CD8-positive, alpha-beta T cell (primary cell): ENCODE measurements at regions of chr7 and their contacts with region 1.

Region 1: DNA sequence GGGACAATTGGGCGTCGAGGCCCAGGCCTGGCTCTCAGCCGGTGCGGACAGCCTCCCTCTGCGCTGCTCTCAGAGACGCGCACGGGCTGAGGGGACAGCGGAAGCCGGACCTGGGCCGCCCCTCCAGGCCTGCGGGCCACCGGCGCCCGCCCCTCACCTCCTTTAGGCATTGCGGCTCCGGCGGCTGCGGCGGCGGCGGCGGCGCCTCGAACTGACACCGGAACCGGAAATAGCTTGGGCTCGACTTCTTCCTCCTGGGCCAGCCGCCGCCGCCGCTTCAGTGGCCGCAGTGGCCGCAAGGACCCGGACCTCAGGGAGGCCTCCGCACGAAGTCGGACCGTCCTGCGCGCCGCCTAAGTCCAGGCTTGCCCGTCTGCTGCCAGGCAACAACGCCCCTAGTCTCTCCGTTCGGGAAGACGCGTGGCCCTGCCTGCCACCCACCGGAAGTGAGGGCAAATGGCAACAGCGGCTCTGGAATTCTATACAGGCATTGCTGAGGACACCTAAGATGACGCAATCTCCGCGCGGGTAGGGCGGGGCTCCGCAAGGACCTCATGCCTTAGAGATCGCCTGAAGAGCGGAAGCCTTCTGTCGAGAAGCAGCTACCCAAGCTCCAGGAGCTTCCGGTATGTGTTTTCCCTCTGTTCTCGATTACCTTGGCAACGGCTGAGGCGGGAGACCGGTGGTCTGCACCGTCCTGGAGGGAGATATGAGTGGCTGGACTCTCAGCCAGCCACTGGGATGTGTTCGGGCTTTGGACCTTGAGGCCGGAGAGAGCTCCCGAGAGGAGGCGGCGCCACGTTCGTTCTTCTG is at the starts of genes BUD31 and PDAP1:
- DNase-seq: peak; percentile 91 to 99 (median 93)
- ATAC-seq: peak; percentile 91
- H3K4me3 ChIP-seq: peak within 1 kb of the TSS; percentile 66 to 84
- H3K4me3 Mint-ChIP-seq: peak within 1 kb of the TSS; percentile 94
- H3K27ac ChIP-seq: peak within 1 kb of the TSS; percentile 83 to 96
- H3K27ac Mint-ChIP-seq: peak within 1 kb of the TSS; percentile 99
- H3K4me1 ChIP-seq: peaks cover 35% of the 10 kb centered on the region
- H3K4me1 Mint-ChIP-seq: peaks cover 62% of the 10 kb centered on the region
- H3K27me3 ChIP-seq: no peaks in the 10 kb centered on the region
- H3K27me3 Mint-ChIP-seq: no peaks in the 10 kb centered on the region
- CTCF ChIP-seq: peak; percentile 19
- total RNA-seq, gene BUD31: 144 TPM
- total RNA-seq, gene PDAP1: 34.5 to 36.2 TPM

Region 2: GRCh38 chr7:99143853-99144672 is 264.5 kb before region 1 on chr7 and contains the start of gene SMURF1:
- CTCF ChIA-PET with region 1: no interaction called
- POLR2A ChIA-PET with region 1: no interaction called
- intact Hi-C with region 1: loop called in 1 of 2 experiments (anchors 10 kb)
- DNase-seq: peak; percentile 41 to 89 (median 71)
- ATAC-seq: peak; percentile 37
- H3K4me3 ChIP-seq: peak within 1 kb of the TSS; percentile 66 to 85
- H3K4me3 Mint-ChIP-seq: peak within 1 kb of the TSS; percentile 93
- H3K27ac ChIP-seq: peak within 1 kb of the TSS; percentile 60 to 74
- H3K27ac Mint-ChIP-seq: peak within 1 kb of the TSS; percentile 89
- H3K4me1 ChIP-seq: peaks cover 33% of the 10 kb centered on the region
- H3K4me1 Mint-ChIP-seq: peaks cover 31% of the 10 kb centered on the region
- H3K27me3 ChIP-seq: no peaks in the 10 kb centered on the region
- H3K27me3 Mint-ChIP-seq: no peaks in the 10 kb centered on the region
- CTCF ChIP-seq: no peak
- total RNA-seq, gene SMURF1: 42.5 to 44.8 TPM

Region 3: GRCh38 chr7:99267481-99267840 is 141.1 kb before region 1 on chr7:
- CTCF ChIA-PET with region 1: no interaction called
- POLR2A ChIA-PET with region 1: no interaction called
- intact Hi-C with region 1: no loop called
- DNase-seq: no peak
- ATAC-seq: no peak
- H3K4me3 ChIP-seq: no peak overlapping the region
- H3K4me3 Mint-ChIP-seq: no peak overlapping the region
- H3K27ac ChIP-seq: no peak overlapping the region
- H3K27ac Mint-ChIP-seq: no peak overlapping the region
- H3K4me1 ChIP-seq: no peaks in the 10 kb centered on the region
- H3K4me1 Mint-ChIP-seq: no peaks in the 10 kb centered on the region
- H3K27me3 ChIP-seq: no peaks in the 10 kb centered on the region
- H3K27me3 Mint-ChIP-seq: peaks cover 2% of the 10 kb centered on the region
- CTCF ChIP-seq: no peak

Region 4: DNA sequence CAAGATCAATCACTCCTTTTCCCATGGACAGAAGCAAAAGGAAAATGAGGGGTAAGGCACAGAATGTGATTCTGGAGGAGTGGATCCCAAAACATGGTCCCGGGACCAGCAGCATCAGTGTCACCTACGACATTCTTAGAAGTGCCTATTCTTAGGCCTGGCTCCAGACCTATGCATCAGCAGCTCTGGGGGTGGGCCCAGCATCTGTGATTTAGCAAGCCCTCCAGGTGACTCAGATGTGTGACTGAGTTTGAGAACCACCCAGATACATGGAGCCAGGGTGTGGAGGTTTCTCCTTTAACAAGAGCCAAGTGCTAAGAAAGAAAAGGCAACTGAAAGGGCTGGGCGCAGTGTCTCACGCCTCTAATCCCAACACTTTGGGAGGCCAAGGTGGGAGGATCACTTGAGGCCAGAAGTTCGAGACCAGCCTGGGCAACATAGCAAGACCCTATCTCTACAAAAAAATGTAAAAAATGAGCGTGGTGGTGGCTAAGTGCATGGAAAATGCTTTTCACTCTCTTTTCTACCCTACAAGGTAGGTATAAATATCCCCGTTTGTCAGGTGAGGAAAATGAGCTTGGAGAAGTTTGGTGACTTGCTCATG is 100.0 kb before region 1 on chr7:
- CTCF ChIA-PET with region 1: no interaction called
- POLR2A ChIA-PET with region 1: no interaction called
- intact Hi-C with region 1: no loop called
- DNase-seq: no peak
- ATAC-seq: no peak
- H3K4me3 ChIP-seq: no peak overlapping the region
- H3K4me3 Mint-ChIP-seq: no peak overlapping the region
- H3K27ac ChIP-seq: no peak overlapping the region
- H3K27ac Mint-ChIP-seq: no peak overlapping the region
- H3K4me1 ChIP-seq: no peaks in the 10 kb centered on the region
- H3K4me1 Mint-ChIP-seq: peaks cover 2% of the 10 kb centered on the region
- H3K27me3 ChIP-seq: peaks cover 0 to 2% of the 10 kb centered on the region in 2 experiments
- H3K27me3 Mint-ChIP-seq: peaks cover 2% of the 10 kb centered on the region
- CTCF ChIP-seq: no peak

Region 5: DNA sequence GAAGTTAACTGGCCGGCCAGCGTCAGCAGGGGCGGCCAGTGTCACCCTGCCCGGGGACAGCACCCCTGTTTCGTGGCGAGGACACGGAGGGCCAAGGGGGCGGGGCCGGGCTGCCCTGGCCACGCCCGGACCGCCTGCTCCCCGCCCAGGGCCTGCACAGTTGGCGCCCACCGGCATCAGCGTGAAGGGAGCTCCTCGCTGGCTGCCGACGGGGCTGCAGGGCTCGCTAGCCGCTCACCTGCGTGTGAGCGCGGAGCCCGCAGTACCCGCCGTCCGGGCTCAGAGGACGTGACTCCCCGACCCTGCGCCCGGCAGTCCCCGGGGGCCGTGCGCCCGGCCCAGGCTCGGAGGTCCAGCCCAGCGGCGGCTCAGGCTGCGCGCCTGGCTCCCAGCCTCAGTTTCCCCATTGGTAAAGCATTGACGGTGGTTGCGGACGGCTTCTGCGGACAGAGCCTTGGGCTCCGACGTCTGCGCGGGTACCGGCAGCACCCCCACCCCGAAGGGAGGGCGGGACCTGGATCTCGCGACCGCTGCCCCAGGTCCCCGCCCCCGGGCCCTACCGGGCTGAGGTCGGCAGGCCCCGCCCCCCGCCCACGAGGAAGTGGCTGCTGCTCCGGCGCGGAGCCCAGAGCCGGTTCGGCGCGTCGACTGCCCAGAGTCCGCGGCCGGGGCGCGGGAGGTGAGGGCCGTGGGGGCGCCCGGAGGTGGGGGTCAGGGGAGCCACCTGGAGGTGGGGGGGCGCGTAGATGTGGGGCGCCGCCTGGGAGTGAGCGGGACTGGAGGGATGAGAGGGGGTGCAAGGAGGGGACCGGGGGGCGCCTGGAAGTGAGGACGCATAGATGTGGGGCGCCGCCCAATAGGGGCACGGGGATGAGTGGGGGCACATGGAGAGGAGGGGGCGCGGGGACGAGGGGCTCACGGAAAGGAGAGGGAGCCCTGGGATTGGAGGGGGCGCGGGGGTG is 34.2 kb before region 1 on chr7 and contains the start of gene ARPC1B:
- CTCF ChIA-PET with region 1: interaction called, 6 read pairs
- POLR2A ChIA-PET with region 1: interaction called, 15 read pairs
- intact Hi-C with region 1: loop called (anchors 1 kb)
- DNase-seq: peak; percentile 69 to 94 (median 86)
- ATAC-seq: peak; percentile 55
- H3K4me3 ChIP-seq: peak within 1 kb of the TSS; percentile 70 to 90
- H3K4me3 Mint-ChIP-seq: peak within 1 kb of the TSS; percentile 84
- H3K27ac ChIP-seq: peak within 1 kb of the TSS; percentile 84 to 91
- H3K27ac Mint-ChIP-seq: peak within 1 kb of the TSS; percentile 96
- H3K4me1 ChIP-seq: peaks cover 55% of the 10 kb centered on the region
- H3K4me1 Mint-ChIP-seq: peaks cover 36% of the 10 kb centered on the region
- H3K27me3 ChIP-seq: no peaks in the 10 kb centered on the region
- H3K27me3 Mint-ChIP-seq: no peaks in the 10 kb centered on the region
- CTCF ChIP-seq: no peak
- total RNA-seq, gene ARPC1B: 68.5 to 70.5 TPM

Region 6: DNA sequence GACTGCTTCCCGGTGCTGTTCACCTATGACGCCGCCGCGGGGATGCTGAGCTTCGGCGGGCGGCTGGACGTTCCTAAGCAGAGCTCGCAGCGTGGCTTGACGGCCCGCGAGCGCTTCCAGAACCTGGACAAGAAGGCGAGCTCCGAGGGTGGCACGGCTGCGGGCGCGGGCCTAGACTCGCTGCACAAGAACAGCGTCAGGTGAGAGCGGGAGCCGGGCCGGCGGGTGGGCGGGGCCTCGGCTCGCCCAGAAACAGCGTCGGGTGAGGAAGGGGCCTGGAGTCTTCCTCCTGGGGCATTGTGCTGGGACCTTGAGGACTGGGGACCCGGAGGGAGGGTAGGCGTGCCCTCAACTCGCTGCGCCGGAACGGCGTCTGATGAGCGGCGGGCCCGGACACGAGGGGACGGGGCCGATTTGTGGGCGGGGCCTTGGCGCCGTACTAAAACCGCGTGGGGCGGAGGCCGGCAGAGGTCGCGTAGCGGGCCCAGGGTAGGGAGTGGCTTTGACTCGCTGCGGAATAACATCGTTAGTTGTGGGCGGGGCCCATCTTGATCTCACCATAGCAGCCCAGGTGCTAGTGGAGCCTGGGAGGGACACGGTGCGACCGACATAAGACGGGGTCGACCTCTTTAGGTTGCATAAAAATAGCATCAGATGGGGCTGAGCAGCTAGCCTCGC is 15.8 kb before region 1 on chr7:
- CTCF ChIA-PET with region 1: interaction called, 11 read pairs
- POLR2A ChIA-PET with region 1: interaction called, 57 read pairs
- intact Hi-C with region 1: loop called (anchors 1 to 2 kb)
- DNase-seq: peak; percentile 61 to 93 (median 87)
- ATAC-seq: peak; percentile 96
- H3K4me3 ChIP-seq: peak overlapping the region; percentile 48 to 50
- H3K4me3 Mint-ChIP-seq: peak overlapping the region; percentile 85
- H3K27ac ChIP-seq: peak overlapping the region; percentile 54 to 78
- H3K27ac Mint-ChIP-seq: peak overlapping the region; percentile 93
- H3K4me1 ChIP-seq: peaks cover 18% of the 10 kb centered on the region
- H3K4me1 Mint-ChIP-seq: peaks cover 17% of the 10 kb centered on the region
- H3K27me3 ChIP-seq: no peaks in the 10 kb centered on the region
- H3K27me3 Mint-ChIP-seq: no peaks in the 10 kb centered on the region
- CTCF ChIP-seq: no peak

Region 7: GRCh38 chr7:99472561-99473243 is 64.1 kb after region 1 on chr7 and contains the start of gene ZNF789:
- CTCF ChIA-PET with region 1: no interaction called
- POLR2A ChIA-PET with region 1: interaction called, 6 read pairs
- intact Hi-C with region 1: loop called (anchors 1 kb)
- DNase-seq: peak; percentile 96 to 99 (median 98)
- ATAC-seq: peak; percentile 97
- H3K4me3 ChIP-seq: peak within 1 kb of the TSS; percentile 75 to 93
- H3K4me3 Mint-ChIP-seq: peak within 1 kb of the TSS; percentile 98
- H3K27ac ChIP-seq: peak within 1 kb of the TSS; percentile 60 to 88
- H3K27ac Mint-ChIP-seq: peak within 1 kb of the TSS; percentile 96
- H3K4me1 ChIP-seq: peaks cover 19% of the 10 kb centered on the region
- H3K4me1 Mint-ChIP-seq: peaks cover 36% of the 10 kb centered on the region
- H3K27me3 ChIP-seq: no peaks in the 10 kb centered on the region
- H3K27me3 Mint-ChIP-seq: no peaks in the 10 kb centered on the region
- CTCF ChIP-seq: no peak
- total RNA-seq, gene ZNF789: 12.9 to 14.1 TPM

Region 8: DNA sequence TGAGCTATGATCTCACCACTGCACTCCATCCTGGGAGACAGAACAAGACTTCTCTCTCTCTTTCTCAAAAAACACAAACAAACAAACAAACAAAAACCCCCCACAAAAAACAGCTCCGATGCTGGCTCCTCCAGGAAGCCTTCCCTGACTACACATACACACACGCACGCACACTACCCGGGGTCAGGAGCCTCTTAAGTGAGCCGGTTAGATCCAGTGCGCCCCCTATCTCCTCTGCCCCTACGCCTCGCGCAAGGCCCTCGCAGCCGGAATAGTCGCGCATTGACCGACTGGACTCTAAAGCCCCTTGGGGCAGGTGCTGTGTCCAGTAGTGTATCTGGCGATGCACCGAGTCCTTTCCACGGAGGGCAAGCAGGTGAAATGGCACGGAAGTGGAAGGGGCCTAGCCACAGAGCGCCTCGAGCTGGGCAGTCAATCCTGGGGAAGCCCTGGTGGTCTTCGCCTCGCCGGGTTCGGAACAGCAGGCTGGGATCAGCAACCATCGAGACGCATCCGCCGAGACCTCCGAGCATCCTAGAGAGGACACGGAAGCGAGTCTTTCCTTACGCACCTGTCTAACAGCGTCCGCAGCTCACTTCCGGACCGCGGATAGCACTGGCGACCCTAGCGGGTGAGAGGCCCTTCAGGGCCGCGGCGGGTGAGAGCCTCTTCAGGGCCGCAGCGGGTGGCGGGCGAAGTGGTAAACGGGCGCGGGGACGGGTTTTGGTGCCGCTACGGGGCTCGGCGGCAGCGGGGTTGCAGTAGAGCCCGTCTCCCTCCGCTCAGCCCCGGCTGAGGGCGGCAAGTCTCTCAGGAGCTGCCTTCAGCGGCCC is 208.0 kb after region 1 on chr7 and contains the start of gene ZSCAN25:
- CTCF ChIA-PET with region 1: no interaction called
- POLR2A ChIA-PET with region 1: interaction called, 3 read pairs
- intact Hi-C with region 1: loop called in 1 of 2 experiments (anchors 1 kb)
- DNase-seq: peak; percentile 66 to 93 (median 86)
- ATAC-seq: peak; percentile 97
- H3K4me3 ChIP-seq: peak within 1 kb of the TSS; percentile 78 to 94
- H3K4me3 Mint-ChIP-seq: peak within 1 kb of the TSS; percentile 97
- H3K27ac ChIP-seq: peak within 1 kb of the TSS; percentile 86 to 87
- H3K27ac Mint-ChIP-seq: peak within 1 kb of the TSS; percentile 98
- H3K4me1 ChIP-seq: peaks cover 25% of the 10 kb centered on the region
- H3K4me1 Mint-ChIP-seq: peaks cover 45% of the 10 kb centered on the region
- H3K27me3 ChIP-seq: no peaks in the 10 kb centered on the region
- H3K27me3 Mint-ChIP-seq: no peaks in the 10 kb centered on the region
- CTCF ChIP-seq: no peak
- total RNA-seq, gene ZSCAN25: 54.1 to 54.7 TPM